Endothelial cell of umbilical vein (primary cell): ENCODE measurements at regions of chr5 and their contacts with region 1.

Region 1: DNA sequence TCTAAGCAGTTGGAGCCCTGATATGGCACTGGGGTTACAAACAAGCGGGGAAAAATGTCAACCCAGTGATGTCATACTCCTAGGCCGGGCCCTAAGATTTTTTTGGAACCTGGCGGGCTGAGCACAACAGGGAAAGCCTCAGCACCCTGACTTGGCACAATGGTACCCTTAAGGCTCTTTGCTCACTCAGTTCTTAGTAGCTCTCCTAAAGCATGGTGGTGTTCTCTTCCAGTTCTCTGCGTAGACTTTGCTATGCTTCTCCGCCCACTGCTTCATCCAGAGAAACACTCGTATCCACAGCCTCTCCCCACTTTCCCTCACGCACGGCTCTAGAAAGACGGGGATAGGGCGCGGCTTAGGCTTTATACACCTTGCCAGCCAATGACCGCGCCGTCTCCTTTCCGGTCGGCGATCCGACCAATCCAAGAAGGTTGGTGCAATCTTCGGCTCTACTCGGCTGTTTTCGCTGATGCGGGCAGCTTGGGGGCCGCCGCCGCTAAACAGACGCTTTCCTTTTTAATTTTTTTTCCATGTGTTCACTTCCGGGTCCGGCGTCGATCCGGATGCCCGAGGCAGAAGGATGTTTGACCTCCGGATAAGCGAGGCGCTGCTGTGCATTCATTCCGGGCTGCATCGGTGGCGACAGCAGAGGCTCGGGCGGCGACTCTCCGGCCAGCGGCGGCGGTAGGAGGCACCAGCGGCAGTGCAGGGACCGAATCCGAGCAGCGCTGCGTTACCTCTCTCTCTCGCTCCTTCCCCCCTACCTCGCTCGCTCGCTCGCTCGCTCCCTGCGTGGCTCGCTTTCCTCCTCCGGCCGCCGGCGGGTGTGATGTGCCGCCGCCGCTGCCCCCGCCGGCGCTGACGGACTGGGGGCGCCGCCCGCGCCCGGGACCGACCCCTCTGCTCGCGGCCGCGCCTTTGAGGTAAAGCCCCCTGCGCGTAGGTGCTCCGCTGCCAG is at the start of gene CSNK1G3:
- DNase-seq: peak; percentile 99
- H3K4me3 ChIP-seq: peak within 1 kb of the TSS; percentile 69 to 81 (median 74)
- H3K27ac ChIP-seq: peak within 1 kb of the TSS; percentile 62
- H3K4me1 ChIP-seq: peaks cover 10% of the 10 kb centered on the region
- H3K27me3 ChIP-seq: peaks cover 2 to 9% of the 10 kb centered on the region in 2 experiments
- CTCF ChIP-seq: no peak
- POLR2A ChIP-seq: peak; percentile 98
- total RNA-seq, gene CSNK1G3: 33.0 and 35.9 TPM in 2 replicates

Region 2: GRCh38 chr5:122845229-122846050 is 666.5 kb before region 1 on chr5 and contains the start of gene SNX24:
- CTCF ChIA-PET with region 1: no interaction called
- POLR2A ChIA-PET with region 1: no interaction called
- dilution Hi-C with region 1: no loop called
- intact Hi-C with region 1: loop called (anchors 10 kb)
- DNase-seq: peak; percentile 71
- H3K4me3 ChIP-seq: peak within 1 kb of the TSS; percentile 76 to 95 (median 93)
- H3K27ac ChIP-seq: peak within 1 kb of the TSS; percentile 0
- H3K4me1 ChIP-seq: peaks cover 18% of the 10 kb centered on the region
- H3K27me3 ChIP-seq: no peaks in the 10 kb centered on the region
- CTCF ChIP-seq: no peak
- POLR2A ChIP-seq: peak; percentile 73
- total RNA-seq, gene SNX24: 8.8 and 14.9 TPM in 2 replicates

Region 3: DNA sequence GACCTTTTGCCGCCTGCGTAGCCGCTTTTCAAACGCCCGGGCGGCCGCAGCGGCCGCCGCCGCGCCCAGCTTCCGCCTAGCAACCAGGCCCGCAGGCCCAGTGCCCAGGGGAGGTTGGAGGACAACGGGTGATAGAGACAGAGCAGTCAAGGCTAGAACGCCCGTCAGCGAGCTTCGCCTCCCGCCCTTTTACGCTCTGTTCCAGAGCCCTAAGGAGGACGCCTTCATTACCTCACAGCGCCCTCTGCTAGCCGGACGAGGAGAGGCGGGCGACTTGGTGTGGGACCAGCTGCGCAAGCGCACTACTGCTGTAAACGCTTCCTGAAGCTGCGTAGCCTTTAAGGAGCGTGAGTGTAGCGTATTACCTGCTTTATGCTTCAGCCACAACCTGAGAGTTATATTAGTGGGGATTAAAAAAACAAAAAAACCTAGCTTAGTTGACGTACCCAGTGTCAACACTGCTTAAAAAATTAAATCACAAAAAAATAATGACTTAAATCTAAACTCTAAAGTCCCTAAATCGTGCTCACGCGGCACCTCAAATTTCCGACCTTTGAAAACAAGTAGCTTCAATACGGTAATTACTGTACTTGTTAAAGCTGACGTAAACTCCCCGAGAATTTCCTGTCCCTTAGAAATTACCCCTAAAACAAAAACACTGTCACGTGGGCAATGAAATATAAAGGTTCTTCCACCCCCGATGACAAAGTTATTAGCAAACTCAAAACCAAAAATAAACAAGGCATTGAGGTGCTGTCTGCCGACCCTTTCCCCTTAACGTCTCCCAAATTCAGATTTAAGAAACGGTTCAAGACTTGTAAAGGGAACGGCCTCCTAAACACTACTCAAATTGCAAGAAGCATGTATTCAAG is 88.4 kb before region 1 on chr5 and contains the start of gene CEP120:
- CTCF ChIA-PET with region 1: interaction called, 23 read pairs
- POLR2A ChIA-PET with region 1: interaction called, 34 read pairs
- dilution Hi-C with region 1: no loop called
- intact Hi-C with region 1: loop called (anchors 1 kb)
- DNase-seq: peak; percentile 100
- H3K4me3 ChIP-seq: peak within 1 kb of the TSS; percentile 81 to 94 (median 93)
- H3K27ac ChIP-seq: peak within 1 kb of the TSS; percentile 62
- H3K4me1 ChIP-seq: peaks cover 11% of the 10 kb centered on the region
- H3K27me3 ChIP-seq: no peaks in the 10 kb centered on the region
- CTCF ChIP-seq: peak; percentile 88
- POLR2A ChIP-seq: peak; percentile 82
- total RNA-seq, gene CEP120: 15.0 and 18.8 TPM in 2 replicates

Region 4: DNA sequence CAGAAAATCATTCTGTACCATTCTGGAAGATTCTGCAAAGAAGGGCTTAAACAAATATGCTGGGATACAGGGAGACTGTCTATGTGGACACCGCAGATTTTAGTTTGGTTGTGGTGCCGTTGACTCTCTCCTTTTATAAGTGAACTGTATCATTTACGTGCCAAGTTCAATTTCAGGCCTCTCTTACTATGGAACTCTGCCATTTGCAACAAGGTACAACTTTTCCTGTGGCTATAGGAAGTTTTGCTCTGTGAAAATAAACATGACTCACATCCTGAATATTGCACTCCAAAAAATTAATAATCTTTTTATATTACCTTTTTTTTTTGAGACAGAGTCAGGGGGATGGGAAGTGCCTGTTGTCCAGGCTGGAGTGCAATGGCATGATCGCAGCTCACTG is 29.7 kb before region 1 on chr5:
- CTCF ChIA-PET with region 1: no interaction called
- POLR2A ChIA-PET with region 1: no interaction called
- dilution Hi-C with region 1: no loop called
- intact Hi-C with region 1: loop called (anchors 2 kb)
- DNase-seq: peak; percentile 53
- H3K4me3 ChIP-seq: no peak overlapping the region
- H3K27ac ChIP-seq: no peak overlapping the region
- H3K4me1 ChIP-seq: peaks cover 5% of the 10 kb centered on the region
- H3K27me3 ChIP-seq: peaks cover 21 to 33% of the 10 kb centered on the region in 2 experiments
- CTCF ChIP-seq: no peak
- POLR2A ChIP-seq: no peak

Region 5: GRCh38 chr5:123585871-123586270 is 73.9 kb after region 1 on chr5:
- CTCF ChIA-PET with region 1: no interaction called
- POLR2A ChIA-PET with region 1: no interaction called
- dilution Hi-C with region 1: no loop called
- intact Hi-C with region 1: no loop called
- DNase-seq: peak; percentile 55
- H3K4me3 ChIP-seq: no peak overlapping the region
- H3K27ac ChIP-seq: no peak overlapping the region
- H3K4me1 ChIP-seq: peaks cover 13% of the 10 kb centered on the region
- H3K27me3 ChIP-seq: no peaks in the 10 kb centered on the region
- CTCF ChIP-seq: no peak
- POLR2A ChIP-seq: no peak